Activated CD8-positive, alpha-beta memory T cell treated with anti-CD3 and anti-CD28 coated beads, Interleukin-2, amount 10 ng/mL, durations not matched to agents 7 days and 5 days (primary cell): ENCODE measurements at regions of chr2 and their contacts with region 1.

Region 1: GRCh38 chr2:165203689-165204559 is at the start of gene SCN3A:
- DNase-seq: no peak
- ATAC-seq: no peak
- H3K4me3 Mint-ChIP-seq: no peak within 1 kb of the TSS
- H3K27ac Mint-ChIP-seq: no peak within 1 kb of the TSS
- H3K4me1 Mint-ChIP-seq: peaks cover 3% of the 10 kb centered on the region
- H3K27me3 Mint-ChIP-seq: no peaks in the 10 kb centered on the region
- total RNA-seq, gene SCN3A: 0.07 TPM in 1 of 2 experiments, not detected in the other

Region 2: GRCh38 chr2:164992818-164993217 is 211.1 kb before region 1 on chr2:
- CTCF ChIA-PET with region 1: interaction called, 18 read pairs
- DNase-seq: peak; percentile 55
- ATAC-seq: peak; percentile 60
- H3K4me3 Mint-ChIP-seq: no peak overlapping the region
- H3K27ac Mint-ChIP-seq: peak overlapping the region; percentile 66
- H3K4me1 Mint-ChIP-seq: peaks cover 32% of the 10 kb centered on the region
- H3K27me3 Mint-ChIP-seq: no peaks in the 10 kb centered on the region

Region 3: DNA sequence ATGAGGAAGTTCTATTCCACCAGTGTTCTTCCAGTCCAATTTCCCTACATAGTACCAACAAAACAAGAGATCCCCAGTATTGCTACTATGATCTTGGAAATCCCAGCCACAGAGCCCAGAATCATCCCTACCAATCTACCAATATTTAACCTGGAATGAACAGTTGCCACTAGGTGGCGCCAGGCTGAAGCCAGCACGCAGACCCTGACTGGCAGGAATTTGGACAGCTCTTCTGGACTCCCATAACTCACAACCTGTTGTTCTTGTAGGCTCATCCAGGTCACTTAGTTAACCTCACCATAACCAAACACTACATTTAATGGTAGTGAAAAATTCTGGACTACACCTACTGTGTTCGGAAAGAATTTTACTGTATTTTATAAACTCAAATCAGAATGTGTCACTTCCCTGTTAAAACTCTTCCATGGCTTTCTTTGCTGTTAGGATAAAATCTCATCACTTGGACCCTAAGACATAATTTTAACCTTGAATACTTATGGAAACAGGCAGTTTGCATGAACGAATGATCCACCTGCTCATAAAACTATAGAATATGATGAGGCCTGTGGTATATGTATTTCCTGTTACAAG is 188.8 kb before region 1 on chr2:
- CTCF ChIA-PET with region 1: interaction called, 26 read pairs
- DNase-seq: peak; percentile 60
- ATAC-seq: peak; percentile 57
- H3K4me3 Mint-ChIP-seq: no peak overlapping the region
- H3K27ac Mint-ChIP-seq: no peak overlapping the region
- H3K4me1 Mint-ChIP-seq: no peaks in the 10 kb centered on the region
- H3K27me3 Mint-ChIP-seq: peaks cover 2% of the 10 kb centered on the region

Region 4: GRCh38 chr2:165161510-165161909 is 42.4 kb before region 1 on chr2:
- CTCF ChIA-PET with region 1: no interaction called
- DNase-seq: no peak
- ATAC-seq: no peak
- H3K4me3 Mint-ChIP-seq: no peak overlapping the region
- H3K27ac Mint-ChIP-seq: no peak overlapping the region
- H3K4me1 Mint-ChIP-seq: no peaks in the 10 kb centered on the region
- H3K27me3 Mint-ChIP-seq: no peaks in the 10 kb centered on the region

Region 5: GRCh38 chr2:165224941-165225340 is 21.0 kb after region 1 on chr2:
- CTCF ChIA-PET with region 1: no interaction called
- DNase-seq: no peak
- ATAC-seq: no peak
- H3K4me3 Mint-ChIP-seq: no peak overlapping the region
- H3K27ac Mint-ChIP-seq: no peak overlapping the region
- H3K4me1 Mint-ChIP-seq: no peaks in the 10 kb centered on the region
- H3K27me3 Mint-ChIP-seq: no peaks in the 10 kb centered on the region

Region 6: DNA sequence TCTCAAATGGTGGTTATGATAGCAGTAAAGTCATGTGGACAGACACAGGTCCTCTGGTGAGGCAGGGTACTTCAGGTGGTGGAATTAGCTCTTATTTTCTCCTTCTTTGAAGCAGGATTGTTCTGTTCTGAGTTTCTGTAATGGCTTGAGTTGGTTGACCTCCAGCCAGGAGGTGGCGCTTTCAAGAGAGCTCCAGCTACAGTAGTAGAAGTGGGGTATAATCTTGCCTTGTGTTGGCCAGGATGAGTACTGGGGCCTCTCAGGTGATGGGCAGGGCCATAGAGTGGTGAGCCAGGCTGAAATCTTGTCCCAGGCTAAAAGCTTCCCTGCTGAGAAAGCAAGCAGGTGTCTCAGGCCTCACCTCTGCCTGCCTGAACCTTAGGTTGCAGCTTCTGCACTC is 213.1 kb after region 1 on chr2:
- CTCF ChIA-PET with region 1: no interaction called
- DNase-seq: no peak
- ATAC-seq: no peak
- H3K4me3 Mint-ChIP-seq: no peak overlapping the region
- H3K27ac Mint-ChIP-seq: no peak overlapping the region
- H3K4me1 Mint-ChIP-seq: no peaks in the 10 kb centered on the region
- H3K27me3 Mint-ChIP-seq: peaks cover 2% of the 10 kb centered on the region

Region 7: GRCh38 chr2:165505514-165505913 is 301.6 kb after region 1 on chr2:
- CTCF ChIA-PET with region 1: no interaction called
- DNase-seq: no peak
- ATAC-seq: no peak
- H3K4me3 Mint-ChIP-seq: no peak overlapping the region
- H3K27ac Mint-ChIP-seq: no peak overlapping the region
- H3K4me1 Mint-ChIP-seq: no peaks in the 10 kb centered on the region
- H3K27me3 Mint-ChIP-seq: no peaks in the 10 kb centered on the region